Activated CD8-positive, alpha-beta T cell treated with anti-CD3 and anti-CD28 coated beads, Interleukin-2, amount 10 ng/mL, durations not matched to agents 7 days and 5 days (primary cell): ENCODE measurements at regions of chr7 and their contacts with region 1.

Region 1: DNA sequence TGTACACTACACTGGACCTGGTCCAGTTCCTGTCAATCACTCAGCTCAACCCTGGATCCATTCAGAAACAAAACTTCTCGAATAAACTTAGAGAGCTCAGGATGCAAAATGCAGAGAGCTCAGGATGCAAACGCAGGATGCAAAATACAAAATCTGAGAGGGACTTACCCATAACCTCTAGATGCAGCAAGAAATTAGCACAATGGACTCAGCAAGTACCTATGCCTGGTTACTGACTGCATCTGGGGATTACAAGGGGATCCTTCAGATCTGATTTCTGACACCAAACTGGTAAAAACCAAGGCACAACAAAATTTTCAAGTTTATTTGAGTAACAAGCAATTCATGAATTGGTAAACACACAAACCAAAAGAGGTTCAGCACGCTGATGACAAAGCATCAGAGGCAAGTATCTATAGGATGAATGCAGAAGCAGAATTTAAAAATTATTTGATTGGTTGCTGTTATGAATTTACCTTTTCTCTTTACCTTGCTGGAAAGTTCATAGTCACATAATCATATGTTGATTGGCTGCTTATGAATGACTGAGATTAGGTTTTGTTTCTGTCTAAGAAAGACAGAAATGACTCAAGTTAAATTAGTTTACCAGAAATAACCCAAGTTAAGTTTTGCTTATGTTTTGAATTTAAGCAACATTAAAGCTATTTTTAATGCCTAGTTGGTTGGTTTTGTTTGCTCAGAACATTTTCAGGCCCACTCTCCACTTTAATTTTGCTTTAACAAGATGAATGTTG is 11.4 kb downstream of the GIMAP6 start:
- DNase-seq: no peak
- ATAC-seq: no peak
- H3K4me3 Mint-ChIP-seq: no peak overlapping the region
- H3K27ac Mint-ChIP-seq: peak overlapping the region; percentile 37
- H3K4me1 Mint-ChIP-seq: peaks cover 56% of the 10 kb centered on the region
- H3K27me3 Mint-ChIP-seq: no peaks in the 10 kb centered on the region

Region 2: GRCh38 chr7:150553163-150553562 is 67.6 kb before region 1 on chr7:
- CTCF ChIA-PET with region 1: no interaction called
- POLR2A ChIA-PET with region 1: no interaction called
- DNase-seq: no peak
- ATAC-seq: no peak
- H3K4me3 Mint-ChIP-seq: no peak overlapping the region
- H3K27ac Mint-ChIP-seq: no peak overlapping the region
- H3K4me1 Mint-ChIP-seq: peaks cover 35% of the 10 kb centered on the region
- H3K27me3 Mint-ChIP-seq: no peaks in the 10 kb centered on the region

Region 3: GRCh38 chr7:150631866-150632864 is 11.4 kb after region 1 on chr7 and contains the start of gene GIMAP6:
- CTCF ChIA-PET with region 1: interaction called, 14 read pairs
- POLR2A ChIA-PET with region 1: interaction called, 15 read pairs
- DNase-seq: peak; percentile 59
- ATAC-seq: peak; percentile 68
- H3K4me3 Mint-ChIP-seq: peak within 1 kb of the TSS; percentile 89
- H3K27ac Mint-ChIP-seq: peak within 1 kb of the TSS; percentile 90
- H3K4me1 Mint-ChIP-seq: peaks cover 60% of the 10 kb centered on the region
- H3K27me3 Mint-ChIP-seq: no peaks in the 10 kb centered on the region
- total RNA-seq, gene GIMAP6: 88.9 to 93.3 TPM